Endothelial cell of umbilical vein (primary cell): ENCODE measurements at regions of chr15 and their contacts with region 1.

Region 1: DNA sequence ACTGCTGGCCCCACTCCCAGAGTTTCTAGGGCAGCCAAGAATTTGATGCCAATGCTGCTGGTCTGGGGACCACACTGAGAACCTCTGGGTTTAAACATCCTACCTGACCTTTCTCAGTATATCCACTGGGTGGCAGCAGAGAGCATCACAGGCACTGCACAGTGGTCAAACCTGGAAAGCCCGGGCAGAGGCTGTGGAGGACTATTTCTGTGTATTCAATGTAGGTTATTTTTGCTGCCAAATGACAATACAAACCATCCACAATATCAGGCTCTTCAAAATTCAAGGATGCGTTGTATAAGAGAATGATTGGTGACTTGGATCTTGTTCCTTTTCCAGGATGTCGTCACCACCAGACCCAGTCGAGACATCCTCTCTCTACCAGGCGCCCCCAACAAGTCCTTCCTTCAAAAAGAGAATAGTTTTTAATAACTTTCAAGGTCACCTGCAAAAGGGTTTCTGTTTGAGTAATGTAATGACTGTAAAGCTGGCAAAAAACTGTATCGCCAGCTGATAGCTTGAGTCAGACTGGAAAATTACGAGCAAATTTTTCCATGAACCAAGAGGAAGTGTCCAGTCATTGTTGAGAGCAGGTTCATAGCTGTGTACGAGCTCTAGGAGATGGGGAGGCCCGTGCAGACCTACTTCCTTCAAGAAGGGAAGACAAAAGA is 30.5 kb upstream of the MYZAP start:
- DNase-seq: peak; percentile 96
- H3K4me3 ChIP-seq: peak overlapping the region in 1 of 3 experiments; percentile 37
- H3K27ac ChIP-seq: peak overlapping the region; percentile 97
- H3K4me1 ChIP-seq: peaks cover 15% of the 10 kb centered on the region
- H3K27me3 ChIP-seq: no peaks in the 10 kb centered on the region
- CTCF ChIP-seq: peak; percentile 79 to 89
- POLR2A ChIP-seq: no peak

Region 2: DNA sequence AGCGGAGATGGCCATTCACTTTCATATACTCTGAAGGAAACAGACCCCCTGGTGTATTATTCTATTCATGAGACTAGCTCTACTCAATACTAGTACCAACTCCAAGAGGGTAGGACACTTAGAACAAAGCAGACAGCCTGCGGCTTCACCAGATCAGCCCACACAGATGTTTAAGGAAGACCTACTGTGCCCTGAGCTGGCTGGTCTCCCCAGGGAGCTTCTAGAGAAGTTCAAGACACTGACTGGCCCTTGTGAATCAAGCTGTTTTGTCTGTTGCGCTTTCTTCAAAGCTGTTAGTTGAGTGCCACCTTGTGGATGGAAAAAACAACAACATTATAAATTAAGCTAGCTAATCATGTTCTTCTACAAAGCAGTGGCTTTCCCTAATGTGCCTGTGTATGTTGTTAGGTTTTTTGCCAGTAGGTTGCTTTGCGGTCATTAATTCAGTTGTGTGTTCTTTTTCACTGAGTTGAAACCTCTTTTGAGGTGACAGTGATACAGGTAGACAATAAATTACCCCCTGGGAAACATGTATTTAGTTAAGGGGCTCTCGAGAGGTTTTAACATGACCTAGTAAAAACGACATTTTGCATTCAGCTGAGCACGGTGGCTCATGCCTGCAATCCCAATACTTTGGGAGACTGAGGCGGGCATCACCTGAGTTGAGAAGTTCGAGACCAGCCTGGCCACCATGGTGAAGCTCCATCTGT is 33.6 kb before region 1 on chr15:
- CTCF ChIA-PET with region 1: interaction called, 25 read pairs
- POLR2A ChIA-PET with region 1: no interaction called
- dilution Hi-C with region 1: no loop called
- intact Hi-C with region 1: no loop called
- DNase-seq: peak; percentile 86
- H3K4me3 ChIP-seq: no peak overlapping the region
- H3K27ac ChIP-seq: no peak overlapping the region
- H3K4me1 ChIP-seq: peaks cover 35% of the 10 kb centered on the region
- H3K27me3 ChIP-seq: no peaks in the 10 kb centered on the region
- CTCF ChIP-seq: peak; percentile 41
- POLR2A ChIP-seq: no peak

Region 3: GRCh38 chr15:57599296-57599810 is 38.2 kb after region 1 on chr15:
- CTCF ChIA-PET with region 1: interaction called, 10 read pairs
- POLR2A ChIA-PET with region 1: no interaction called
- dilution Hi-C with region 1: no loop called
- intact Hi-C with region 1: no loop called
- DNase-seq: no peak
- H3K4me3 ChIP-seq: no peak overlapping the region
- H3K27ac ChIP-seq: no peak overlapping the region
- H3K4me1 ChIP-seq: no peaks in the 10 kb centered on the region
- H3K27me3 ChIP-seq: no peaks in the 10 kb centered on the region
- CTCF ChIP-seq: no peak
- POLR2A ChIP-seq: no peak

Region 4: GRCh38 chr15:57635300-57635909 is 74.2 kb after region 1 on chr15:
- CTCF ChIA-PET with region 1: interaction called, 25 read pairs
- POLR2A ChIA-PET with region 1: no interaction called
- dilution Hi-C with region 1: no loop called
- intact Hi-C with region 1: no loop called
- DNase-seq: peak; percentile 24
- H3K4me3 ChIP-seq: no peak overlapping the region
- H3K27ac ChIP-seq: no peak overlapping the region
- H3K4me1 ChIP-seq: no peaks in the 10 kb centered on the region
- H3K27me3 ChIP-seq: no peaks in the 10 kb centered on the region
- CTCF ChIP-seq: no peak
- POLR2A ChIP-seq: no peak

Region 5: GRCh38 chr15:57667171-57667849 is 106.1 kb after region 1 on chr15:
- CTCF ChIA-PET with region 1: interaction called, 10 read pairs
- POLR2A ChIA-PET with region 1: no interaction called
- dilution Hi-C with region 1: no loop called
- intact Hi-C with region 1: no loop called
- DNase-seq: peak; percentile 67
- H3K4me3 ChIP-seq: no peak overlapping the region
- H3K27ac ChIP-seq: no peak overlapping the region
- H3K4me1 ChIP-seq: peaks cover 7% of the 10 kb centered on the region
- H3K27me3 ChIP-seq: no peaks in the 10 kb centered on the region
- CTCF ChIP-seq: peak in 1 of 2 donors; percentile 42
- POLR2A ChIP-seq: no peak

Region 6: GRCh38 chr15:57751177-57751800 is 190.1 kb after region 1 on chr15:
- CTCF ChIA-PET with region 1: interaction called, 17 read pairs
- POLR2A ChIA-PET with region 1: no interaction called
- dilution Hi-C with region 1: no loop called
- intact Hi-C with region 1: no loop called
- DNase-seq: peak; percentile 72
- H3K4me3 ChIP-seq: no peak overlapping the region
- H3K27ac ChIP-seq: no peak overlapping the region
- H3K4me1 ChIP-seq: no peaks in the 10 kb centered on the region
- H3K27me3 ChIP-seq: no peaks in the 10 kb centered on the region
- CTCF ChIP-seq: peak; percentile 53 to 67
- POLR2A ChIP-seq: no peak